MCF 10A (cell line): ENCODE measurements at regions of chr5 and their contacts with region 1.

Region 1: GRCh38 chr5:137629646-137630045 is 106.2 kb downstream of the KLHL3 start:
- DNase-seq: peak; percentile 87
- H3K4me3 Mint-ChIP-seq: no peak overlapping the region
- H3K27ac Mint-ChIP-seq: no peak overlapping the region
- H3K4me1 Mint-ChIP-seq: no peaks in the 10 kb centered on the region
- H3K27me3 Mint-ChIP-seq: no peaks in the 10 kb centered on the region
- CTCF ChIP-seq: peak; percentile 99

Region 2: DNA sequence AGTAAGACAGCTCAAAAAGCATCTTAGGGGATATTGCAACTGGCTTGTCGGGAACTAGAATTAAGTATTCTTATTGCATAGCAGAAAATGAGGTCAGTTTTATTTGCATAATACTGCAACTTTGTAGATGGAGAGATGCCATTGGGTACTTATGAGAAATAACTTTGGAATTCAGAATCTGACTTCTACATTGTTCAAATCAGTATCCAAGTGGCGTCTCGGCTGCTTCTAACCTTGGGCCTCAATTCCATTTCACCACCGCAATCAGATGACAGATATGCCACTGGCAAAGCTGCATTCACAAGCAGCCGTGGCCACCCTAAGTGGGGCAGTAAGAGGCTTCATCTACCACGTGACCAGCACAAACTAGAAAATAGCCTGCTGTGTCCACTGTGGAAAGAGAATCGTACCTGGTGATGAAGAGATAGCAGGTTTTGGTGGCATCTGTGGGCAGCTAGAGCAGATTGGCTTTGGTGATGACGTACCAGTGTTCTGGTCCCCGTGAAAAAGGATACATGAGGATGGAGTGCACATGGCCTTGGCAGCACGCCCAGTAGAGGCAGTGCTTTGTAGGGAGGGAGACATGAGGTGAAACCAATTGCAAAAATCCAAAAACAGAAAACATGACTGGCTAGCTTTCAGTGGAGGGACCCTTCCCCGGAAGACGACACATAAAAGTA is 10.3 kb before region 1 on chr5:
- CTCF ChIA-PET with region 1: interaction called, 30 read pairs
- POLR2A ChIA-PET with region 1: interaction called, 8 read pairs
- intact Hi-C with region 1: no loop called
- DNase-seq: peak; percentile 79
- H3K4me3 Mint-ChIP-seq: no peak overlapping the region
- H3K27ac Mint-ChIP-seq: peak overlapping the region; percentile 46
- H3K4me1 Mint-ChIP-seq: peaks cover 41% of the 10 kb centered on the region
- H3K27me3 Mint-ChIP-seq: no peaks in the 10 kb centered on the region
- CTCF ChIP-seq: no peak

Region 3: DNA sequence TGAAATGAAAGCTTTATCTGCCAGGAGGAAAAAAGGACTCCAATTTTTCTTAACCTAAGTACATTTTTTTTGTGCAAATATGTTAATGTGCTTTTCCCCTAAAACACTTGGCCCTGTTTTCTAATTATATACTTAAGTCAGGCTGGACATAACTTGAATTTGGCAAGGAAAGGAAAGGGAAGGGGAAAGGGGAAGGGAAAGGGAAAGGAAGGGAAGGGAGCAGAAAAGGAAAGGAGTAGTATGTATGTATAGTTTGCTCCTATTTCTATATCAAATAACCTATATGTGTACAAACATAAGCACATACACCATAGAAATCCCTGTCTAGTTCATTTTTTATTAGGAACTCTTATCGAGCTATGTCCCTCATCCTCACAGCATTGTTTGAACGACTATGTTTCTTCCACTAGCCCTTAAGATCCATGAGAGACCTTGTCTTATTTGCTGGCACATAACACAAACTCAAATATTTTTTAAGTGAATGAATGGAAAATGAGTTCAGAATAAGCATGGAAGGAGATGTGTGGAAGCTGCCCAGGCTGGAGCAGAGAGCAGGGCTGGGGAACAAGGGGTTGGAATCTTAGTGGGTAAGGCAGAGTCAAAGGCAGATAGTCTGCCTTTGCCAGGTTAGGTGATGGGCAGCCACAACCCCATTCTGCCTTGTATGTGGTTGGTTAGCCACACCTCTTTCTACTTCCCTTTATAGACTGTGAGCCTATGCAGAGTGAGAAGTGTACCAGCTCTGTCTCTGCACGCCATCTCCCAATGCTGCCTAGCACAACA is 36.2 kb after region 1 on chr5:
- CTCF ChIA-PET with region 1: interaction called, 101 read pairs
- POLR2A ChIA-PET with region 1: interaction called, 4 read pairs
- intact Hi-C with region 1: no loop called
- DNase-seq: no peak
- H3K4me3 Mint-ChIP-seq: no peak overlapping the region
- H3K27ac Mint-ChIP-seq: no peak overlapping the region
- H3K4me1 Mint-ChIP-seq: no peaks in the 10 kb centered on the region
- H3K27me3 Mint-ChIP-seq: peaks cover 24% of the 10 kb centered on the region
- CTCF ChIP-seq: no peak

Region 4: GRCh38 chr5:137734962-137735554 is 105.4 kb after region 1 on chr5:
- CTCF ChIA-PET with region 1: interaction called, 690 read pairs
- POLR2A ChIA-PET with region 1: no interaction called
- intact Hi-C with region 1: no loop called
- DNase-seq: no peak
- H3K4me3 Mint-ChIP-seq: no peak overlapping the region
- H3K27ac Mint-ChIP-seq: no peak overlapping the region
- H3K4me1 Mint-ChIP-seq: peaks cover 4% of the 10 kb centered on the region
- H3K27me3 Mint-ChIP-seq: no peaks in the 10 kb centered on the region
- CTCF ChIP-seq: no peak

Region 5: DNA sequence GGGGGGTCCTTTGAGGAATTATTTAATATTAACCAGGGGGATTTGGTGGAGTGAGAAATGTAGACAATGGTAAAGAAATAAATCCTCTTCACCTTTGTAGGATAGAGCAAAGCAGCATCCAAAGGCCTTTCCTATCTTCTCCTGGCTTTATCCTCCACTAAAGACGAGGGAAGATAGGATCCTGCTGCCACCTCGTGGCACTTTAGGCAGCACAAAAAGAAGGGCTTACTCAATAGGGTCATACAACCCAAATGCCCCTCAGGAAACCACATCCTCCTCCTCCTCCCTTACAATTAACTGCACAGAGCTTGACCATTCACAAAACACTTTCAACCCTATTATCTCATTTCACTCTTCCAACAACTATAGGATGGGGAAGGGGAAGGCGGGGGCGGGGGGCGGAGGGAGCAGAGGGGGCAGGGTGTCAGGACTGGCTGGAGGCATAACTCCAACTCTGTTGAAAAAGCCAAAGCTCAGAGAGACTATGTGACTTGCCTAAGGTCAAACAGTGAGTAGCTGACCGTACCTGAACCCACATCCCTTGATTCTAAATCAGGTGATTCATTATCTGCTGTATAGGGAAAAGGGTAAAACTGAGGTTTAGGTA is 192.6 kb after region 1 on chr5:
- CTCF ChIA-PET with region 1: interaction called, 8 read pairs
- POLR2A ChIA-PET with region 1: no interaction called
- intact Hi-C with region 1: loop called (anchors 1 kb)
- DNase-seq: peak; percentile 72
- H3K4me3 Mint-ChIP-seq: no peak overlapping the region
- H3K27ac Mint-ChIP-seq: no peak overlapping the region
- H3K4me1 Mint-ChIP-seq: no peaks in the 10 kb centered on the region
- H3K27me3 Mint-ChIP-seq: peaks cover 29% of the 10 kb centered on the region
- CTCF ChIP-seq: peak; percentile 55

Region 6: GRCh38 chr5:137858223-137858916 is 228.7 kb after region 1 on chr5:
- CTCF ChIA-PET with region 1: no interaction called
- POLR2A ChIA-PET with region 1: no interaction called
- intact Hi-C with region 1: no loop called
- DNase-seq: peak; percentile 54
- H3K4me3 Mint-ChIP-seq: peak overlapping the region; percentile 51
- H3K27ac Mint-ChIP-seq: peak overlapping the region; percentile 54
- H3K4me1 Mint-ChIP-seq: peaks cover 9% of the 10 kb centered on the region
- H3K27me3 Mint-ChIP-seq: no peaks in the 10 kb centered on the region
- CTCF ChIP-seq: no peak

Region 7: DNA sequence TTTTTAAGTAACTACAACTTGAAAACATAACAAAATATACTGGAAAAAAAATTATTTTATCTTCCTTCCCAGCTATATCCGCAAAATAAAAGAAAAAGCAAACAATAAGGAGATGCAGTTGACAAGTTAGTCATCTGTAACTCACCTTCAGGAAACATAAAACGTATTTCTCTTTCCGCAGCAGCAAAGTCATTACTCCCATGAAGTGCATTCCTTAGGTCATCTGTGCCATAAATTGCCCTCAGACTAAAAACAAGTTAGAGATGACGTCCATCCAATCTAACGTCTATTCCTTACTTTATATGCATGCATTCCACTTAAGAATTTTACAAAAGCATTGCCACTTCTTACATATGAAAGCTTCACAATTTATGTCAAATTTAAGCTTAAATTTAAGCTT is 498.7 kb after region 1 on chr5:
- CTCF ChIA-PET with region 1: interaction called, 12 read pairs
- POLR2A ChIA-PET with region 1: no interaction called
- intact Hi-C with region 1: loop called (anchors 1 kb)
- DNase-seq: no peak
- H3K4me3 Mint-ChIP-seq: no peak overlapping the region
- H3K27ac Mint-ChIP-seq: no peak overlapping the region
- H3K4me1 Mint-ChIP-seq: peaks cover under 1% of the 10 kb centered on the region
- H3K27me3 Mint-ChIP-seq: peaks cover 24% of the 10 kb centered on the region
- CTCF ChIP-seq: no peak